CD8-positive, alpha-beta memory T cell (primary cell): ENCODE measurements at regions of chr11 and their contacts with region 1.

Region 1: GRCh38 chr11:57359896-57360690 is 20.9 kb downstream of the PRG3 start:
- DNase-seq: no peak
- H3K4me3 ChIP-seq: no peak overlapping the region
- H3K4me3 Mint-ChIP-seq: no peak overlapping the region
- H3K27ac ChIP-seq: no peak overlapping the region
- H3K27ac Mint-ChIP-seq: no peak overlapping the region
- H3K4me1 ChIP-seq: no peaks in the 10 kb centered on the region
- H3K4me1 Mint-ChIP-seq: no peaks in the 10 kb centered on the region
- H3K27me3 ChIP-seq: no peaks in the 10 kb centered on the region
- H3K27me3 Mint-ChIP-seq: peaks cover 6 to 24% of the 10 kb centered on the region in 2 donors

Region 2: DNA sequence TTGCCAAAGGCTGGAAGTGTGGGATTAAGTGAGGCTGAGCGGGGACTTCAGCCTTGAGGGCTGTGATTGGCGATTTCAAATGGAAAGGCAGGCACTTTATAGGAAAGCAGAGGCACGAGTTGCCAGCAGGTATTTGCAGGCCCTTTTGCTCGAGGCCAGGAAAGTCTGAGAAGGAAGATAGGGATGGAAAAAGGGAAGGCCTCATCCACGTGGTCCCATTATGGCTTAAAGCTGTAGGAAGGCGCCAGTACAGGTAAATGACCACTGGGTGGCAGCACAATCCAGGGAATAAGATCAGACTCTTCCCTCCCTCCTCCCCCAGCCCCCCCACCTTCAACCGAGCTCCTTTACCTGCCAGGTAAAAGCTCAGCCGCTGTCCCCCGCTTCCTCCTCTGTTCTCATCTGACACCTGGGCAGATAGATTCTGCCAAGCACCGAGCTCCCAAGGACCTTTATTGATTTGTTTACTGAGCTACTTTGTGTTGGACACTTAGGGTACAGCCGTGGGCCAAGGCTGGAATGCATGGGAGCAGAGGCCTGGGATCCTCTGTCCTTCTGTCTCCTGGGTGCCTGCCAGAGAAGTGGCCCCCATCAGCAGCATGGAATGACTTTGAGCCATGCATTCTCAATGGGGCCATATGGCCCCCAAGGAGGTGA is 14.4 kb before region 1 on chr11:
- CTCF ChIA-PET with region 1: interaction called, 14 read pairs
- POLR2A ChIA-PET with region 1: no interaction called
- DNase-seq: peak; percentile 50 to 76 (median 62)
- H3K4me3 ChIP-seq: no peak overlapping the region
- H3K4me3 Mint-ChIP-seq: no peak overlapping the region
- H3K27ac ChIP-seq: no peak overlapping the region
- H3K27ac Mint-ChIP-seq: no peak overlapping the region
- H3K4me1 ChIP-seq: no peaks in the 10 kb centered on the region
- H3K4me1 Mint-ChIP-seq: peaks cover 0 to 5% (median 3%) of the 10 kb centered on the region in 3 donors
- H3K27me3 ChIP-seq: no peaks in the 10 kb centered on the region
- H3K27me3 Mint-ChIP-seq: peaks cover 0 to 4% of the 10 kb centered on the region in 2 donors

Region 3: GRCh38 chr11:57379732-57380131 is 19.6 kb after region 1 on chr11:
- CTCF ChIA-PET with region 1: no interaction called
- POLR2A ChIA-PET with region 1: no interaction called
- DNase-seq: no peak
- H3K4me3 ChIP-seq: no peak overlapping the region
- H3K4me3 Mint-ChIP-seq: no peak overlapping the region
- H3K27ac ChIP-seq: no peak overlapping the region
- H3K27ac Mint-ChIP-seq: no peak overlapping the region
- H3K4me1 ChIP-seq: no peaks in the 10 kb centered on the region
- H3K4me1 Mint-ChIP-seq: no peaks in the 10 kb centered on the region
- H3K27me3 ChIP-seq: no peaks in the 10 kb centered on the region
- H3K27me3 Mint-ChIP-seq: peaks cover 7 to 45% of the 10 kb centered on the region in 2 donors

Region 4: DNA sequence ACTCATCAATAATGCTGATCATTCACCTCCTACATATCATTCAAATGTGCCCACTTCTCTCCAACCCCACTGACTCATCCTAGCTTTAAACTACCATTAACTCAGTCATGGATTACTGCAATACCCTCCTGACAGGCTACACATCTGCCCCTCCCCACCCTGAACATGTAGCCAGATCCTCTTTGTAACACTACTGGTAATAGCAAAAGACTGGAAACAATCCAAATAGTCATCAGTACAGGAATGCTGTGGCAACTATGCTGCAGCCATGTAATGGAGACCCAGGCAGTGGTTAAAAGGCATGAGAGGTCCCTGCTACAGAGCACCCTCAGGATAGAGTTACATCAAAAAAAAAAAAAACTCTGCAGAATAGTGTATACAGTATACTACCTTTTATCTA is 50.2 kb after region 1 on chr11:
- CTCF ChIA-PET with region 1: no interaction called
- POLR2A ChIA-PET with region 1: no interaction called
- DNase-seq: no peak
- H3K4me3 ChIP-seq: no peak overlapping the region
- H3K4me3 Mint-ChIP-seq: no peak overlapping the region
- H3K27ac ChIP-seq: no peak overlapping the region
- H3K27ac Mint-ChIP-seq: peak overlapping the region in 1 of 8 donors; percentile 84
- H3K4me1 ChIP-seq: no peaks in the 10 kb centered on the region
- H3K4me1 Mint-ChIP-seq: peaks cover 9 to 23% (median 12%) of the 10 kb centered on the region in 3 donors
- H3K27me3 ChIP-seq: no peaks in the 10 kb centered on the region
- H3K27me3 Mint-ChIP-seq: no peaks in the 10 kb centered on the region

Region 5: DNA sequence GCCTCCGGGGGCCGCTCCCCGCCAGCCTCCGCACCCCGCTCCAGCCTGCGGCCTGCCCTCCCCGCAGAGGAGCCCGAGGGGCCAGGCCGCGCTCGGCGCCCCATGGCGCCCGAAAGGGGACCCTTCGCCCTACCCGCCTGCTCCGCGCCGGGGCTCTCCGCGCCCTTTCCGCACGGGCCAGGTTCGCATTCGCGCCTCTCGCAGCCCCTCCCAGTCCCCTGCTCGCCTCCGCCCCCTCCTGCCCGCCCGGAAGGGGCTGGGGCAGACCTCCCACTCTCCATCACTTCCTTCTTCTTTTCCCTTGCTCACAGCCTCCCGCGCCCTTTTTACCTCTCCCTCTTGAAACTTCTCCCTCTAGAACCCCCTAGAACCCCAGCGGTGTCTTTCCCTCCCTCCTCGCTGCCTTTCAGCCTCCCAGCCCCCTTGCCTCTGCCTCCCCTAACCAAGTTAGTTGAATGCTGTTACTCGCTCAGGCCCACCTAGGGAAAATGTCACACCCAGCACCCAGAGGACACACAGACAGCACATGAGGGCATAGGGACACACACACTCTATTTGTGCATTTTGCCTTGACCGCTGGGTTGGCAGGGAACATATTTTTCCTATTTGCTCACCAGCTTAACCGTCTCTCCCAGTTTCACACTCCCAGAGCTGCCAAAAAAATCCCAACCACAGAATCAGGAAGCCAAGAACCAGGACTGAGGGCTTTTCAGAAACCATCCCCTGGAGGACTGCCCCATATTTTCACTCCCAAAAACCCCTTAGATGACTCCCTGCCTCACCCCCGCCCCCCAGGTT is 67.0 kb after region 1 on chr11 and contains the start of gene SLC43A3:
- CTCF ChIA-PET with region 1: no interaction called
- POLR2A ChIA-PET with region 1: no interaction called
- DNase-seq: peak; percentile 46 to 74 (median 54)
- H3K4me3 ChIP-seq: peak within 1 kb of the TSS; percentile 43
- H3K4me3 Mint-ChIP-seq: peak within 1 kb of the TSS; percentile 88 to 94 (median 90)
- H3K27ac ChIP-seq: peak within 1 kb of the TSS; percentile 68
- H3K27ac Mint-ChIP-seq: peak within 1 kb of the TSS; percentile 92 to 97 (median 96)
- H3K4me1 ChIP-seq: peaks cover 35% of the 10 kb centered on the region
- H3K4me1 Mint-ChIP-seq: peaks cover 45 to 56% (median 54%) of the 10 kb centered on the region in 3 donors
- H3K27me3 ChIP-seq: no peaks in the 10 kb centered on the region
- H3K27me3 Mint-ChIP-seq: no peaks in the 10 kb centered on the region
- total RNA-seq, gene SLC43A3: 434 to 447 TPM